H1 (cell line): ENCODE measurements at regions of chr11 and their contacts with region 1.

Region 1: GRCh38 chr11:72141066-72141465 is 5.5 kb downstream of the FOLR3 start:
- DNase-seq: no peak
- H3K4me3 ChIP-seq: no peak overlapping the region
- H3K27ac ChIP-seq: no peak overlapping the region
- H3K4me1 ChIP-seq: no peaks in the 10 kb centered on the region
- H3K27me3 ChIP-seq: no peaks in the 10 kb centered on the region
- CTCF ChIP-seq: no peak
- EP300 ChIP-seq: no peak
- POLR2A ChIP-seq: no peak
- RAD21 ChIP-seq: no peak

Region 2: GRCh38 chr11:72119198-72119597 is 21.9 kb before region 1 on chr11:
- CTCF ChIA-PET with region 1: interaction called, 22 read pairs
- POLR2A ChIA-PET with region 1: no interaction called
- DNase-seq: no peak
- H3K4me3 ChIP-seq: no peak overlapping the region
- H3K27ac ChIP-seq: no peak overlapping the region
- H3K4me1 ChIP-seq: no peaks in the 10 kb centered on the region
- H3K27me3 ChIP-seq: peaks cover 0 to 9% (median 3%) of the 10 kb centered on the region in 4 experiments; a peak in 5 of 7 replicates
- CTCF ChIP-seq: no peak
- EP300 ChIP-seq: no peak
- POLR2A ChIP-seq: no peak
- RAD21 ChIP-seq: no peak

Region 3: GRCh38 chr11:72160319-72160718 is 19.3 kb after region 1 on chr11:
- CTCF ChIA-PET with region 1: interaction called, 71 read pairs
- POLR2A ChIA-PET with region 1: no interaction called
- DNase-seq: no peak
- H3K4me3 ChIP-seq: no peak overlapping the region
- H3K27ac ChIP-seq: no peak overlapping the region
- H3K4me1 ChIP-seq: no peaks in the 10 kb centered on the region
- H3K27me3 ChIP-seq: no peaks in the 10 kb centered on the region
- CTCF ChIP-seq: no peak
- EP300 ChIP-seq: no peak
- POLR2A ChIP-seq: no peak
- RAD21 ChIP-seq: no peak

Region 4: DNA sequence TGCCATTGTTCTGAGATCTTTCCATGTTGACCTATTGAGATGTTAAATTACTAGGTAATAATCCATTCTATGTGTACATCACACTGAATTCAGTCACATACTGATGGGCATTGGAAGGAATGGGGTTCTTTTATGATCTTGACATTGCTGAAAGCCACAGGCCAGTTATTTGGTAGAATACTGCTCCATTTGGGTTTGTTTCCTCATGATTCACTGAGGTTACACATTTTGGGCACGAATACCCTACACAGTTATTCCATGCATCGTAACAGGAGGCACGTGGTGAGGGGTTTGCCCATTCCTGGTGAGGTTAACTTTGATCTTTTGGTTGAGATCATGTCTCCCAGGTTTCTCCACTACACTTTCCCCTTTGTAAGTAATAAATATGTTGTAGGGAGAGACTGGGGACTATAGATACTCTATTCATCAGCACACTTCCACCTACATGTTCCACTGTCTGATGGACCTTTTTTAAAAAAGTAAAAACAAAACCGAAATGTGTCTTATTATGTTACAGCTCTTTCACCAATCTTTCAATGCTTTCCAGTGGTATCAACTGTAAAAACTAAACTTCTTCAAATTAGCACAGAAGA is 38.8 kb after region 1 on chr11:
- CTCF ChIA-PET with region 1: interaction called, 19 read pairs
- POLR2A ChIA-PET with region 1: no interaction called
- DNase-seq: no peak
- H3K4me3 ChIP-seq: no peak overlapping the region
- H3K27ac ChIP-seq: no peak overlapping the region
- H3K4me1 ChIP-seq: no peaks in the 10 kb centered on the region
- H3K27me3 ChIP-seq: no peaks in the 10 kb centered on the region
- CTCF ChIP-seq: no peak
- EP300 ChIP-seq: no peak
- POLR2A ChIP-seq: no peak
- RAD21 ChIP-seq: no peak